ENCODE measurements at regions of chr16 and their contacts with region 1.

Region 1: DNA sequence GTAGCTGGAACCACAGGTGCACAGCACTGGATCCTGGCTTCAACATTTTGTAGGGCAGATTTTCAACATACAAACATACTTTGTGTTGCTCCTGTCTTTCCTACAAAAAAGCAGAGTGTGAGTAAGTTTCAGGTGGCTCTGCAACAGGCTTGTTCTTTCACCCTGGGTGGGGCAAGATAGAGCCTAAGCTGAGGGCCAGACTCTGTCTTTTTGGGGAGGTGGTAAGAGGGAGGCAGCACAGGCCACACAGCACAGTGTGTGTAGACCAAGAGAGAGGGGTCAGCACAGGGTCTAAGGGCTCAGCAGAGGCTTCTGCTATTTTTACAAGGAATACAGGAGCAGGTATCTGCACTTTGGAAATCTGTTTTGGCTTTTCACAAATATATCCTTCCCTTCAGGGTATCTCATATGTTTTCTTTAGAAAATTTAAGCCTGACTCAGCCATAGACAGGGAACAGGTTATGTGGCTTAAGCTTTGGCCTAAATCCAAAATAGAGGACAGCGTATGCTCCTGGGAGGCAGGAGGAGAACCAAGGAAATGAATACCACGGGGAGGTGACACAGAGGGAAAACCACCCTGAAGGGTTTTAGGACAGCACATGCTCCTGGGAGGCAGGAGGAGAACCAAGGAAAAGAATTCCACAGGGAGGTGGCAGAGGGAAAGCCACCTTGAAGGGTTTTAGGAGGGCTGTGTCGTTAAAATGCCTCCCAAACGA is 21.6 kb downstream of the EMC8 start:
- DNase-seq: peak; percentile 72 to 95
- H3K4me3 ChIP-seq: peak overlapping the region; percentile 14; the same call in 1 of the 2 replicates
- H3K27ac ChIP-seq: peak overlapping the region; percentile 83
- H3K4me1 ChIP-seq: peaks cover 33% of the 10 kb centered on the region
- H3K27me3 ChIP-seq: no peaks in the 10 kb centered on the region
- CTCF ChIP-seq: no peak

Region 2: GRCh38 chr16:85728879-85729278 is 48.9 kb before region 1 on chr16:
- CTCF ChIA-PET with region 1: no interaction called
- POLR2A ChIA-PET with region 1: no interaction called
- intact Hi-C with region 1: loop called (anchors 10 kb)
- DNase-seq: no peak
- H3K4me3 ChIP-seq: no peak overlapping the region
- H3K27ac ChIP-seq: no peak overlapping the region
- H3K4me1 ChIP-seq: peaks cover 9% of the 10 kb centered on the region; the same call in 1 of the 2 replicates
- H3K27me3 ChIP-seq: no peaks in the 10 kb centered on the region
- CTCF ChIP-seq: peak; percentile 38; the same call in 1 of the 2 replicates

Region 3: DNA sequence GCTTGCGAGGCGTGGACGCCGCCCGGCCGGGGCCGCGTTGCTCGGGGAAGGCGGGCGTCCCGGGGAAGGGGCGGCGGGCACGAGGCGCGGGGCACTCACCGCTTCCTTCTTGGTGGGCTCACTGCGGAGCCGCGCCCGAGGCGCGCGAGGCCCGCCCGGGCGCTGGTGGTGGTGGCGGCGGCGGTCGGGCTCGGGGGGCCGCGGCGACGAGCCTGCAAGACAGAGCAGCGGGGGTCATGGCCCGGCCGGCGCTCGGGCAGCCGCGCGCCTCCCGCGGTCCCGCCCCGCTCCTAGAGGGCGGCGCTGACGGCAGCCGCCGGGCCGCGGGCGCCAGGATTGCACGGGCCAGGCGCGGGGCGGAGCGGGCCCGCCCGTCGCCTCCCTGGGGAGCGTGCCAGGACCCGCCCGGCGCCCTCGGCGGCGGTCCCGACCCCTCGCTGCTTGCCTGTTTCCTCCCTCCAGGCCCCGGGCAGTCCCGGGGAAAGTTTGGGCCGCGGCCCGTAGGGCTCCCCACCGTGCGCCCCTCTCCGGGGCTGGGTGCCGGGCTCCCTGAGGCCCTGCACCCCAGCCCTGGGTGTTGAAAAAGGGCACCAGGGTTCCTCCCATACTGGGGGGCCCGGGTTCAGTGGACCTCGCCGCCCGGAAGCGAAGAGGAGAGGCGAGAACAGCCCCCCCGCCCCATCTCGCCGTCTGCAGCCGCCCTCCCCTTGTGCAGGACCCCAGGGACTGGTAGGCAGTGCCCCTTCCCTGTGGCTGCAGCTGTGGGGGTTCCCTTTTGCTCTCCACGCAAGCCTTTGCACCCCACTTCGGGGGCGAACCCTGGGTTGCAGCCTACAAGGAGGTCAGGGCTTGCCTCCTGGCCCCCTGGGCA is 26.7 kb before region 1 on chr16 and contains the start of gene C16orf74:
- CTCF ChIA-PET with region 1: no interaction called
- POLR2A ChIA-PET with region 1: interaction called, 3 read pairs
- intact Hi-C with region 1: loop called (anchors 2 kb)
- DNase-seq: peak in 1 of 2 experiments; percentile 73
- H3K4me3 ChIP-seq: peak within 1 kb of the TSS; percentile 91
- H3K27ac ChIP-seq: peak within 1 kb of the TSS; percentile 74
- H3K4me1 ChIP-seq: peaks cover 66% of the 10 kb centered on the region
- H3K27me3 ChIP-seq: no peaks in the 10 kb centered on the region
- CTCF ChIP-seq: no peak
- total RNA-seq, gene C16orf74: 44.3 and 51.6 TPM in 2 replicates

Region 4: DNA sequence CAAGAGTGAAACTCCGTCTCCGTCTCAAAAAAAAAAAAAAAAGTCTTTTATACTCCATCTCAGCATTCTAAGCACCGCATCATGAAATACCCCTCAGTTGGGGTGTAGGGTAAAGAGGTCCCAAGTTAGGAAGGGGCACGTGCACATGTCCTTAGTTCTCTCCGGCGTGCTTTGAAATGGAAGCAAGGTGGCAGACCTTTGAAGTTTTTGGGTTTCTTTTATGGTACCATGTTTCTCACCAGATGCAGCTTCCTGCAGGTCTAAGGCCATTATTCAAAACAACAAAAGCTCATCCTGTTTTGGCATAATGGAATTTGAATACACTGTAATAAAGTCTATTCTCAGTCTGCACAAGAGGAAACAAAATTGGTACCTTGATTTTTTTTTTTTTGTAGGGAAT is 12.0 kb after region 1 on chr16:
- CTCF ChIA-PET with region 1: no interaction called
- POLR2A ChIA-PET with region 1: interaction called, 30 read pairs
- intact Hi-C with region 1: no loop called
- DNase-seq: no peak
- H3K4me3 ChIP-seq: no peak overlapping the region
- H3K27ac ChIP-seq: no peak overlapping the region
- H3K4me1 ChIP-seq: no peaks in the 10 kb centered on the region
- H3K27me3 ChIP-seq: no peaks in the 10 kb centered on the region
- CTCF ChIP-seq: no peak

Measured in PC-9 (cell line).